ENCODE measurements at regions of chr17 and their contacts with region 1.

Region 1: GRCh38 chr17:17877529-17878358 is 41.0 kb upstream of the SREBF1 start:
- DNase-seq: peak; percentile 66 to 86
- ATAC-seq: peak; percentile 85 to 88
- H3K4me3 ChIP-seq: peak overlapping the region in 1 of 4 donors; percentile 34
- H3K27ac ChIP-seq: peak overlapping the region; percentile 84 to 90 (median 90)
- H3K4me1 ChIP-seq: peaks cover 47 to 61% of the 10 kb centered on the region in 2 donors
- H3K27me3 ChIP-seq: no peaks in the 10 kb centered on the region
- CTCF ChIP-seq: no peak
- POLR2A ChIP-seq: no peak

Region 2: DNA sequence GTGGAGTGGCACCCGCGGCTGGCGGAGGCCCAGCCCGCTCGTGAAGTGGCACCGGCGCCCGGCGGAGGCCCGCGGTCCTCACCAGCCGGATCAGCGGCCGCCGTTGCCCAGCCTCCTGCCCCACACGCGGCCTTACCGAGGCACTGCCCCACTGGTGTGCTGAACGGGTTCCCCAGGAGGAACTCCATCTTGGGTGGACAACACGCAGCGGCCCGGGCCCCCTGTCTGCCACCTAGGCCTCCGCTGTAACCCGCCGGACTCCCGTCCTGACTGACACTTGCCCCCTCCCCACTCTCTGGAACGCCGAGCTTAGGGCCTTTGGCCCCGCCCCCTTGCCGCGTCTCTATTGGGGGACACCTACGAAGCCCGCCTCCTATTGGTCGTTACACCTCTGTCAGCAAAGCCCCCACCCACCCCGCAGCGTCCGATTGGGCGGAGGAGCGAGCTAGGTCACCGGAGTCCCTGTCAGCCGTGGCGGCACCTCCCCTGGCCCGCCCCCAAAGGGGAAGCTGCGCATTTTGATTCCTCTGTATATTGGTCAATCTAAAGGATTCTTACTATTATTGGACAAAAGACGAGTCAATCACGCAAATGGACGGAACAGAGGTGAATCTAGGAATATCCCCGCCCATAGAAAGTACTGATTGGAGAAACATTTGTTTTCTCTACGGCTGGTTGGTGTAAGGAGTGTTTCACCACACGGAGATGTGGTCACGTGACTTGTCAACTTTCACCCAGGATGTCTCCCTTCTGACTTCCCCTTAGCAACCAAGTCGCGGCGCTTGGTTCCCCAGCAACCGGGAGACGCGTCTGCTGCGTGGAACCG is 94.6 kb after region 1 on chr17 and contains the starts of genes DRC3 and TOM1L2:
- in situ Hi-C with region 1: loop called in 1 of 4 experiments (anchors 10 kb)
- intact Hi-C with region 1: no loop called
- DNase-seq: peak; percentile 100
- ATAC-seq: peak; percentile 98
- H3K4me3 ChIP-seq: peak within 1 kb of the TSS; percentile 76 to 95 (median 90)
- H3K27ac ChIP-seq: peak within 1 kb of the TSS; percentile 87 to 97 (median 97)
- H3K4me1 ChIP-seq: peaks cover 23 to 27% of the 10 kb centered on the region in 2 donors
- H3K27me3 ChIP-seq: no peaks in the 10 kb centered on the region
- CTCF ChIP-seq: peak; percentile 10 to 57 (median 25)
- POLR2A ChIP-seq: peak; percentile 96 to 98
- total RNA-seq, gene DRC3: 0.05 to 0.81 (median 0.28) TPM
- total RNA-seq, gene TOM1L2: 55.7 to 97.1 (median 73.3) TPM

Region 3: DNA sequence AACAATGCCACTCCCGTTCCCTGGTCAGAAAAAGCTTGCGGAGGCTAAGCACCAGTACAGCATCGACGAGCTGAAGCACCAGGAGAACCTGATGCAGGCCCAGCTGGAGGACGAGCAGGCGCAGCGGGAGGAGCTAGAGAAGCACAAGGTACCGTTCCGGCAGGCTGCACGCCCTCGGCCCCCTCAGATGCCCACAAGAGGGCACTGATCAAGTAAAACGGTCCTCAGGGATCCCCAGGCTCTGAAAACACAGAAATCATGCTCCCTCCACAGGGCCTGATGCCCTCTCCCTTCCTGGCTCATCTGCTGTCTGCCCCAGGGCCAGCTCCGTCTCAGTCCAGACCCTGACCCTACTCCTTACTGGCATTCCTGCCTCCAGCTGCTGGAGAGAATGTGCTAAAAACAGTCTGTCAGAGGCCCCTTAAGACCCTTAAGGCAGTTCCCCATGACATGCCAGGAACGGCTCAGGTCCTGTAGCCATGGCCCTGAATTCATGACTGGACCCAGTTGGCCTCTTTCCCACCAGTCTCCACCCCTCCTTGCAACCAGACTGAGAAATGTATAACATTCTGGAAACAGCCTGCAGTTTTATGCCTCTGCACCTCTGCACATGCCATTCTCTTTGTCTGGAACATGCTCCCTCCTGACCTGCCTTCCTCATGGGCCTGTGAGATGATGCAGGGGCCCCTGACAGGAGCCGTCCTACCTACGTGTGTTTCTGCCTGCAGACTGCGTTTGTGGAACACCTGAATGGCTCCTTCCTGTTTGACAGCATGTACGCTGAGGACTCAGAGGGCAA is 116.7 kb after region 1 on chr17:
- in situ Hi-C with region 1: no loop called
- intact Hi-C with region 1: no loop called
- DNase-seq: no peak
- ATAC-seq: no peak
- H3K4me3 ChIP-seq: no peak overlapping the region
- H3K27ac ChIP-seq: no peak overlapping the region
- H3K4me1 ChIP-seq: no peaks in the 10 kb centered on the region
- H3K27me3 ChIP-seq: no peaks in the 10 kb centered on the region
- CTCF ChIP-seq: no peak
- POLR2A ChIP-seq: no peak